ENCODE measurements at regions of chr5 and their contacts with region 1.

Region 1: GRCh38 chr5:150000256-150000989 is at the starts of genes HMGXB3 and TIGD6:
- DNase-seq: peak; percentile 93
- H3K4me3 ChIP-seq: peak within 1 kb of the TSS; percentile 60 to 92 (median 86)
- H3K27ac ChIP-seq: peak within 1 kb of the TSS; percentile 86
- H3K4me1 ChIP-seq: peaks cover 16% of the 10 kb centered on the region
- H3K27me3 ChIP-seq: no peaks in the 10 kb centered on the region
- CTCF ChIP-seq: peak in 1 of 2 donors; percentile 8
- total RNA-seq, gene HMGXB3: 46.7 to 60.0 TPM
- total RNA-seq, gene TIGD6: 5.8 to 6.0 TPM

Region 2: DNA sequence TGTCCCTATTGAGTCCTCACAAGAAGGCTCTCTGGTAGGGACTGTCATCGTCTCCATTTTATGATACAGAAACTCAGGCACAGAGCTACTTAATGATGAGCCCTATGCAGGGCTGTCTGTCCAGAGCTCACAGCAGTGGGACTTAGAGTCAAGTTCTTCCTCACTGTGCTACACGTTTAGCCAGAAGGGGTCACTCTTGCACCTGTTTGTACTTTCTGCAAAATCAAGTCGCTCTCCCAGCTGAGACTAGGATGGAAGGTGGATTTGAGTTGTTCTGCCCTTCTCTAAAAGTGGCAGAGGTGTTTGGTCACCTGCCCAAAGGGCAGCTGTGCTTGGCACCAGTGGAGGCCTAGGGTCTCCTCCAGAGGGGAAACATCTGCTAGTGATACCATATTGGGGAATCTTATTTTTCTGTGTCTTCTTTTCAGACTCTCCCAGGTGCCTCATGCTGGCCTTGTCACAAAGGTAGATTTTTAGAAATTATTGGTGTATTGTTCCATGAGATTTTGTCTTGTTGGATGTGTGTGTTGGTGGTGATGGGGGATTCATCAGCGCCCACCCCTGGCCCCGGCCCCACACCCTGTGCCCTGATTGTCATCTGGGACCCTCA is 166.1 kb before region 1 on chr5:
- CTCF ChIA-PET with region 1: interaction called, 5 read pairs
- dilution Hi-C with region 1: no loop called
- in situ Hi-C with region 1: loop called (anchors 5 to 10 kb)
- intact Hi-C with region 1: no loop called
- DNase-seq: peak; percentile 62
- H3K4me3 ChIP-seq: no peak overlapping the region
- H3K27ac ChIP-seq: no peak overlapping the region
- H3K4me1 ChIP-seq: peaks cover 8% of the 10 kb centered on the region
- H3K27me3 ChIP-seq: no peaks in the 10 kb centered on the region
- CTCF ChIP-seq: peak; percentile 75 to 79

Region 3: GRCh38 chr5:149938791-149939358 is 61.5 kb before region 1 on chr5:
- CTCF ChIA-PET with region 1: no interaction called
- dilution Hi-C with region 1: loop called (anchors 10 kb)
- in situ Hi-C with region 1: no loop called
- intact Hi-C with region 1: no loop called
- DNase-seq: peak; percentile 98
- H3K4me3 ChIP-seq: peak overlapping the region in 1 of 3 experiments; percentile 17
- H3K27ac ChIP-seq: peak overlapping the region; percentile 100
- H3K4me1 ChIP-seq: peaks cover 68% of the 10 kb centered on the region
- H3K27me3 ChIP-seq: no peaks in the 10 kb centered on the region
- CTCF ChIP-seq: peak in 1 of 2 donors; percentile 7

Region 4: GRCh38 chr5:150022163-150022540 is 21.7 kb after region 1 on chr5:
- CTCF ChIA-PET with region 1: no interaction called
- dilution Hi-C with region 1: no loop called
- in situ Hi-C with region 1: no loop called
- intact Hi-C with region 1: loop called (anchors 1 kb)
- DNase-seq: peak; percentile 88
- H3K4me3 ChIP-seq: peak overlapping the region in 2 of 3 experiments; percentile 1 to 16
- H3K27ac ChIP-seq: peak overlapping the region; percentile 81
- H3K4me1 ChIP-seq: peaks cover 68% of the 10 kb centered on the region
- H3K27me3 ChIP-seq: no peaks in the 10 kb centered on the region
- CTCF ChIP-seq: no peak

Region 5: GRCh38 chr5:150052956-150053712 is 52.7 kb after region 1 on chr5:
- CTCF ChIA-PET with region 1: no interaction called
- dilution Hi-C with region 1: no loop called
- in situ Hi-C with region 1: no loop called
- intact Hi-C with region 1: loop called (anchors 5 kb)
- DNase-seq: peak; percentile 59
- H3K4me3 ChIP-seq: no peak overlapping the region
- H3K27ac ChIP-seq: no peak overlapping the region
- H3K4me1 ChIP-seq: peaks cover 38% of the 10 kb centered on the region
- H3K27me3 ChIP-seq: no peaks in the 10 kb centered on the region
- CTCF ChIP-seq: no peak

Region 6: DNA sequence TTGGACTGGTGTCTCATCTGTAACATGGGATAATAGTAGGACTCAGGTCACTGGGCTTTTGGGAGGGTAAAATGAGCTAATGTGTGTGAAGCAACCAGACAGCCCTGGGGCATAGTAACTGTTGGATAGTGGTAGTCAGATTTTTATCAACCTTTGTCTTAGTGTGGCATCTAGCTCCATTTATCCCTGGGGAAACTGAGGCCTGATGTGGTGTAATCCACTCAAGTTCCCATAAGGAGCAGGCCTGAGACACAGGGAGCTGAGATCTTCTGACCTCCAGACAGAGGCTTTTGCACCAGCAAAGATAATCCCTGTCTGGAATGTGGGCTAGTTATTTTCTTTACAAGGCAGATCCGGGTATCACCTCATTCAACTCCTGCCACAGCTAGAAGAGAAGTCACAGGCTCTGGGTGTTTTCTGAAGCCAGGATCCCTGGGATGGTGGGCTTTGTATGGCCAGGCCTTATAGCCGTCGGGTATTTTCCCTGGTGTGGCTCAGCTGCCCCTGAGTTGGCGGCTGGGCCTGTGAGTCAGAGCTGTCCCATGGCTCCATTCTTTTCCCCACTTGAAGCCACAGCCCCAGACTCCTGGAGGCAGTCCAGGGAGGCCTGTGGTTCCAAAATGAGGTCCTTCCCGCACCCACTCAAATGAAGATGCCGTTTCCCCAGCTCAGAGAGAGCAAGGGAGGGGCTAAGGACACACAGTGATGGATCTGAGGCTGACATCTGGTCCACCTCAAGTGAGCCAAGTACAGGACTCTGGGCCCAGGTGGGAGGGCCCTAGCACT is 112.0 kb after region 1 on chr5:
- CTCF ChIA-PET with region 1: no interaction called
- dilution Hi-C with region 1: no loop called
- in situ Hi-C with region 1: no loop called
- intact Hi-C with region 1: loop called (anchors 2 kb)
- DNase-seq: peak; percentile 79
- H3K4me3 ChIP-seq: no peak overlapping the region
- H3K27ac ChIP-seq: peak overlapping the region; percentile 46
- H3K4me1 ChIP-seq: peaks cover 41% of the 10 kb centered on the region
- H3K27me3 ChIP-seq: no peaks in the 10 kb centered on the region
- CTCF ChIP-seq: no peak

Region 7: GRCh38 chr5:150122158-150122510 is 121.7 kb after region 1 on chr5:
- CTCF ChIA-PET with region 1: no interaction called
- dilution Hi-C with region 1: no loop called
- in situ Hi-C with region 1: no loop called
- intact Hi-C with region 1: loop called (anchors 2 kb)
- DNase-seq: peak; percentile 23
- H3K4me3 ChIP-seq: no peak overlapping the region
- H3K27ac ChIP-seq: no peak overlapping the region
- H3K4me1 ChIP-seq: peaks cover 7% of the 10 kb centered on the region
- H3K27me3 ChIP-seq: no peaks in the 10 kb centered on the region
- CTCF ChIP-seq: peak; percentile 17 to 51